ENCODE measurements at regions of chr17 and their contacts with region 1.

Region 1: DNA sequence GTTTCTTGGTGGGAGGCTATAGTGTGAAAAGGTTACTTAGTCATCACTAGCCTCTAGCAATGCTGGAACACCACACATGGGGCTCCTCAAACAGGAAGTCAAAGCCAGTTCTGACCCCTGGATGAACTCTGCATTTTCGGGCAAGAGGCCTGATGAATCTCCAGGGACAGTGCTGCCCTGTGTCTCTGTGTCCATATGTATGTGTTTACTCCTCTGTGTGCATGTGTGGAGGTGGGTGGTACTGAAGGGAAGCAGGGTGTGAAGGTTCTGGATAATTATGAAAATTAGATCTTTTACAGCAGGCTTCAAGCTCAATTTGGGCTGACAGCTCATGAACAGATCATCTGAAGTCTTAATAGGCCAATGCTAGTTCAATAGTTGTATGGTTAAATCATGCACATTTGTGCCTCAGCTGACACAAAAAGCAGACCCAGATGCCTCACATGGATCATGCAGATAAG is 133.6 kb downstream of the SNX11 start:
- DNase-seq: no peak

Region 2: GRCh38 chr17:48228721-48229120 is 12.4 kb before region 1 on chr17:
- CTCF ChIA-PET with region 1: interaction called, 14 read pairs
- POLR2A ChIA-PET with region 1: no interaction called
- DNase-seq: no peak

Measured in HEK293T (cell line).